ENCODE measurements at regions of chr11 and their contacts with region 1.

Region 1: DNA sequence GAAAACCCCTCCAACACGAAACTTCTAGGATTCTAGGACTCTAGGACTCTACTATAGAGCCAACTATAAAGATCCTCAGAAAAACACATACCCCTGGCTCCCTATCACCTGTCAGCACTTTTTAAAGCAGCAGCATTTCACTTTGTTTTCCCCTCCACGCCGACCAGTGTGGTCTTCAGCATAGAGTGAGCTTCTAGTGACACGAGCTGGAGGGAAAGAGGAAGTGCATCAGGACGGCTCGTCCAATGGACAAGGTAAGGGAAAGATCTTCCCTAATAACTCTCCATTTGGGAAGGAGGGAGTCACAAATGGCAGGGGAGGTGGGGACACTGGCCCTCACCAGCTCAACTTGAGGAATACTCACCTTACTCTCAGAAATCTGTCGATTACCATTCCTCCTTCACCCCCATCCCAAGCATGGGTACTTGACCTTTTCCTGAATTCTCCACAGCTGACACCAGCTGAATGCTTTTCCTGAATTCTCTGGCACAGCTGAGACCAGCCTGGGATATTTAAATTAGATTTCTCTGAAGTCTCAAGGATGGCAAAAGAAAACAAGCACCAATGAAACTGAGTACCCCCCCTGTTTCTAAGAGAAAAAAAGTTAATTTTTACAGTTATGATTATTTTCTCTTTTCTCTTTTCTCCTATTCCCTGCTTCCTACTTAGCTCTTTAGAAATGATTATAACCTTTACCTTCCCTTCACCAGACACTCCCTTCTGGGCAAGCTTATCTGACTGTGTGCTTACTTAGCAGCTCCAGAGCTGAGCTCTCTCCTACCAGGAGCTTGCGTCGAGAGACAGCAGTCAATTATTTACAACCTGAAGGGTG is 33.3 kb upstream of the NNMT start:
- DNase-seq: no peak
- H3K4me3 ChIP-seq: no peak overlapping the region
- H3K27ac ChIP-seq: no peak overlapping the region
- H3K27me3 ChIP-seq: peaks cover 36% of the 10 kb centered on the region
- CTCF ChIP-seq: peak; percentile 77

Region 2: DNA sequence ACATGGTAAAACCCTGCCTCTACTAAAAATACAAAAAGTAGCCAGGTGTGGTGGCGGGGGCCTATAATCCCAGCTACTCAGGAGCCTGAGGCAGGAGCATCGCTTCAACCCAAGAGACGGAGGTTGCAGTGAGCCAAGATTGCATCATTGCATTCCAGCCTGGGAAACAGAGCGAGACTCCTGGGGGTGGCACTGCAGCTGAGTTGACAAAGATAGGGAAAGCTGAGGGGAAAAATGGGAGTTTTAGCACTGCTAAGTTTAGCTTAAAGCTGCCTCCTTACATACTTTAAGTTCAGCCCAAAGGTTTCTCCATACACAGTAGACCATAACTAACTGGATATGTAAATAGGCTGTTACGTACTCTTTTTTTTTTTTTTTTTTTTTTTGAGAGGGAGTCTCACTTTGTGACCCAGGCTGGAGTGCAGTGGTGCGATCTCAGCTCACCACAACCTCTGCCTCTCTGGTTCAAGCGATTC is 378.5 kb before region 1 on chr11:
- CTCF ChIA-PET with region 1: interaction called, 11 read pairs
- POLR2A ChIA-PET with region 1: no interaction called
- DNase-seq: no peak
- H3K4me3 ChIP-seq: no peak overlapping the region
- H3K27ac ChIP-seq: no peak overlapping the region
- H3K27me3 ChIP-seq: no peaks in the 10 kb centered on the region
- CTCF ChIP-seq: no peak

Region 3: DNA sequence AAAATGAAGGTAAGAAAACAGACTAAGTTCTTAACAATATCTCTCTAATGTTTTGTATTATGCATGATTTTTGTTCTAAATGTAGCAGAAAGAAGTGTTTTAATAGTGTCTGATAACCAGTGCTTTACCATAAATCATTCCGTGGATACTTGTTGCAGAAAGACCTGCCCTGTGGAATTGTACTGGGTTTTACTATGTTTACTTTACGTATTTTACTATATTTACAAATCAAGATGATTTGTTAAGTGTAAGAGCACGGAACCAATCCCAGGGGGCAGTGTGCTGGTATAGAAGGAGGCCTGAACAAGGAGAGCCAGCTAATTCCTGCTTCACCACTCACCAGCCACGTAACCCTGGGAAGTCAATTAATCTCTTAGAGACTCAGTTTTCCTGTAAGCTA is 356.9 kb before region 1 on chr11:
- CTCF ChIA-PET with region 1: interaction called, 14 read pairs
- POLR2A ChIA-PET with region 1: no interaction called
- DNase-seq: peak; percentile 8
- H3K4me3 ChIP-seq: no peak overlapping the region
- H3K27ac ChIP-seq: no peak overlapping the region
- H3K27me3 ChIP-seq: no peaks in the 10 kb centered on the region
- CTCF ChIP-seq: peak; percentile 36; the same call in 1 of the 2 replicates

Region 4: DNA sequence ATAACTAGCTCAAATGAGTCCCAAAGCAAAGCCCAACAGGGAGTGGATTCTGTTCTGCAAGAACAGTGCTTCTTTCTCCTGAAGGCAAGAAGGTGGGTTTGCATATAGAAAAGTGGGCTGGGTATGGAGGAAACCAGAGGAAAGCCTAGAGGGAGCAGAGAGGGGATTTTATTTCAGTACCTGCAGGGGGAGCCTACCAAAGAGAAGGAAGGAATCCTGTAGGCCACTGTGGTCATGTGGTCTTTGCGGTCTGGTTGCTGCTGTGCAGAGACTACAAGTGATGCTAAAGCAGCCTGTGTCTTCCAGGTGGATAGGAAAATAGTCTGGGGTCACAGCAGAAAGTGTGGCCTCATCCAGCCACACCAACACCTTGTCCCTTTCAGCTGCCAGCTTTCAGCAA is 236.5 kb before region 1 on chr11:
- CTCF ChIA-PET with region 1: interaction called, 40 read pairs
- POLR2A ChIA-PET with region 1: no interaction called
- DNase-seq: no peak
- H3K4me3 ChIP-seq: no peak overlapping the region
- H3K27ac ChIP-seq: no peak overlapping the region
- H3K27me3 ChIP-seq: no peaks in the 10 kb centered on the region
- CTCF ChIP-seq: no peak

Region 5: DNA sequence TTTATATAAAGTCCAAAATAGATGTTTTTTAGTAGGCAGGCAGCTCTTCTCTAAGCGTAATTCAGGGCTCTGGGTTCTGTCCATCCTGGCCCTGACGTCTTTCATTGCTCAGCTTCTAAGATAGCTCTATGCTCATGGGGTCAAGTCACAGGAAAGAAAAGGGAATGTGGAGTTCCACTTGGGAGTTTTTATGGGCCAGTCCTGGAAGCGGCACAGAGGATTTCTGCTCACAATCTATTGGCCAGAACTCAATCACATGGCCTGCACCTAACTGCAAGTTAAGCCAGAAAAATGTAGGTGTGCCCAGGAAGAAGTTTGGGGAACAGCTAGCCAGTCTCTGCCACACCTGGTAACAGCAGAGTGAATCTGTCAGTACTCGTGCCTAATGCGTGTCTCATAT is 210.7 kb before region 1 on chr11:
- CTCF ChIA-PET with region 1: interaction called, 14 read pairs
- POLR2A ChIA-PET with region 1: no interaction called
- DNase-seq: no peak
- H3K4me3 ChIP-seq: no peak overlapping the region
- H3K27ac ChIP-seq: no peak overlapping the region
- H3K27me3 ChIP-seq: peaks cover 3% of the 10 kb centered on the region
- CTCF ChIP-seq: no peak

Region 6: GRCh38 chr11:114250993-114251814 is 11.7 kb before region 1 on chr11:
- CTCF ChIA-PET with region 1: interaction called, 36 read pairs
- POLR2A ChIA-PET with region 1: no interaction called
- DNase-seq: no peak
- H3K4me3 ChIP-seq: no peak overlapping the region
- H3K27ac ChIP-seq: no peak overlapping the region
- H3K27me3 ChIP-seq: peaks cover 5% of the 10 kb centered on the region
- CTCF ChIP-seq: no peak